Transverse colon (tissue), 4 donors: ENCODE measurements at regions of chrX and their contacts with region 1.

Region 1: DNA sequence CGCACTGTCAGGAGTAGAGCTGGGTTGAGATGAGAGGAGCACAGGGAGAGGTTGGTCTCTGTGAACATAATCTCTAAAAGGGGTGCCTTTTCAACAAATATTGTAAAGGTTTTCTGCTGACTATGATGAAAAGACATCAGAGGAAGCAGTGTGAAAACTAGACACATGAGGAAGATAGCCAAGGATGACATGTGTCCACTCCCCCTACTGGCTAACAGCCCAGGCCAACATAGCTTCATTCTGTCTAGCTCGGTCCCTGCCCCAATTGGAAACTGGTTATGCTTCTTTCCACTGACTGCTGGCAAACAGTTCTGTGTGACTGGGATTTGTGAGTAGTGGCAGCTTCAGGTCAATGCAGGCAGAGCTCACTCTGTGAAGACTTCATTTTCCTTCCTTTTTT is 115.4 kb upstream of the ESX1 start:
- DNase-seq: no peak
- H3K4me3 ChIP-seq: no peak overlapping the region
- H3K27ac ChIP-seq: no peak overlapping the region
- H3K4me1 ChIP-seq: no peaks in the 10 kb centered on the region
- H3K27me3 ChIP-seq: no peaks in the 10 kb centered on the region
- CTCF ChIP-seq: no peak
- EP300 ChIP-seq: no peak
- POLR2A ChIP-seq: no peak

Region 2: DNA sequence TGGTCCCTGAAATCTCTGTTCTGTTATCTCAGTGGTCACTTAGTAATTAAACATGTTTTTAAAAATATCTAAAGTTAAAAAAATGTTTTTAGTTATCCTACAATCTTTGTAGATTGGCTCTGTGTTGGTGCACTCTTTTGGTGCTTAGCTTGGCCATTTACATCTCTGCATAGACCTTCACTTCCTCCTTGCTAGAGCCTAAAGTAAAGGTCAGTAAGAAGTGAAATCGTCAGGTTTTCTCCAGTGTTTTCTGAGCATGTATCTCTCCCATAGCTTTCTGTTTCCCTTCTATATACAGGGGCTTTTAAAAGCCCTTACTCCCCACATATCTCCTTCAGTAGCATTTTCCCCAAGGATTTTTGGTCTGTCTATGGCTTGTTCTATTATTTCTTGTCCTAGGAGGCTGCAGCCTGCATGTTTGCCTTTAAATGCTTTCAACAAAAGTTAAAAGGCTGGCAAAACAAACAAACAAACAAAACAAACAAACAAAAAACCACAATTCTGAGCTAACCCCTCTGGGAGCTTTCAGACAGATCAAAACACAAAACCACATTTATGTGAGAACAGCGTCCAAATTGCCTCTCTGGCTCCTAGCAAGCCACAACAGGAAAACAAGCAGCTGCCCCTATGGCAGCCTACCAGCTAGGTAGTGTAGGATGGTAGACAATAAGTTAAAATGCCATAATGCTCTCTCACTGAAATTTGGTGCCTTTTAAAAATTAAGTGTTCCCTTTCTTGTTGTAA is 1685.1 kb before region 1 on chrX:
- in situ Hi-C with region 1: no loop called
- intact Hi-C with region 1: no loop called
- DNase-seq: no peak
- H3K4me3 ChIP-seq: no peak overlapping the region
- H3K27ac ChIP-seq: no peak overlapping the region
- H3K4me1 ChIP-seq: no peaks in the 10 kb centered on the region
- H3K27me3 ChIP-seq: no peaks in the 10 kb centered on the region
- CTCF ChIP-seq: no peak
- EP300 ChIP-seq: no peak
- POLR2A ChIP-seq: no peak

Region 3: GRCh38 chrX:104469771-104470170 is 99.7 kb after region 1 on chrX:
- in situ Hi-C with region 1: loop called in 1 of 4 experiments (anchors 25 kb)
- intact Hi-C with region 1: no loop called
- DNase-seq: no peak
- H3K4me3 ChIP-seq: no peak overlapping the region
- H3K27ac ChIP-seq: no peak overlapping the region
- H3K4me1 ChIP-seq: no peaks in the 10 kb centered on the region
- H3K27me3 ChIP-seq: no peaks in the 10 kb centered on the region
- CTCF ChIP-seq: no peak
- EP300 ChIP-seq: no peak
- POLR2A ChIP-seq: no peak

Region 4: DNA sequence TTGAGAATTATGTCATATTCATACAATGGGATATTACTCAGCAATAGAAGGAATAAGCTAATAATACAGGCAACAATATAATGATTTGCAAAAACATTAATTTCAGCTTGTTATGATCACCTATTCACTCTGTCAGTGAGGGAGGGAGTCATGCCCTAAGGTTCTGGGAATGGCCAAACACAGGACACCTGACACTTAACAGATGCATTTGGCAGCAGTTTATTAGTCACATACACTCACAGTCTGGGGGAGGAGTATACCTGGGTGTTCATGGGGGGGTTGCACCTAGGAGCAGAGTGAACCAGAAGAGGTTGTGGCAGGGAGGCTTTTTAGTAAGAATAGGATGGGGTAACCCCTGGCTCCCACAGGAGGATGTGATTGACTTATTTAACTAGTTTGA is 1630.1 kb after region 1 on chrX:
- in situ Hi-C with region 1: no loop called
- intact Hi-C with region 1: no loop called
- DNase-seq: no peak
- H3K4me3 ChIP-seq: no peak overlapping the region
- H3K27ac ChIP-seq: no peak overlapping the region
- H3K4me1 ChIP-seq: no peaks in the 10 kb centered on the region
- H3K27me3 ChIP-seq: no peaks in the 10 kb centered on the region
- CTCF ChIP-seq: no peak
- EP300 ChIP-seq: no peak
- POLR2A ChIP-seq: no peak